Astrocyte of the cerebellum (primary cell): ENCODE measurements at regions of chr17 and their contacts with region 1.

Region 1: DNA sequence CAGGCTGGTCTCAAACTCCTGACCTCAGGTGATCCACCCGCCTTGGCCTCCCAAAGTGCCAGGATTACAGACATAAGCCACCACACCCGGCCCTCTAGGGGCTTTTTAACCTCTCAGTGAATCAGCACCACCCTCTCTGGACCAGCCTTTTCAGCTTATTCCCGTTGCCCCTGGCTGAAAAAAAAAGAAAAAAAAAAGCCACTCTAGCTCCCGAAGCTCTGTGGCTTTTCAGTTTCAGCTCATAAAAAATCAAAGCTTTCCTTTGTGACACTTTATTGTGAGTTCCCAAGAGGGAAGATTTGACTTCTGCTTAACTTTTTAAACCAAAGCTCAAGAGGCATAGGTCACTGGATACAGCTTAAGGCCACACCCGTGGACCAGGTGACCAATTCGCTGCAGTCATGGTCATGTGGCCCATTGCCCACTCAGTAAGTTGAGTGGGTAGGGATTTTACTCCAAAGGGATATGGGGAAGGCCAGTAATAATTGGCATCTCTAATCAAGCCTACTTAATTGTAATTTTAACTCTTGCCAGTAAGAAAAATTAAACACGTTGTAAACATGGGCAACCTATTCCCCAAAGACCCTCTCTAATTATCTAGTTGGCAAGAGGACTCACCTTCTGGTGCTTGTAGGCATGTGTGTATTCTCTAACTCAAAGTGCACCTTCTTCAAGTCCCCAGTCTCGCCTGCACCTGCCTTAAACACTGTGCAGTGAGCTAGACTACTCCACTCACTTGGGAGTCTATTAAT is 46.7 kb upstream of the MED13 start:
- DNase-seq: no peak
- H3K4me3 ChIP-seq: no peak overlapping the region
- CTCF ChIP-seq: no peak

Region 2: DNA sequence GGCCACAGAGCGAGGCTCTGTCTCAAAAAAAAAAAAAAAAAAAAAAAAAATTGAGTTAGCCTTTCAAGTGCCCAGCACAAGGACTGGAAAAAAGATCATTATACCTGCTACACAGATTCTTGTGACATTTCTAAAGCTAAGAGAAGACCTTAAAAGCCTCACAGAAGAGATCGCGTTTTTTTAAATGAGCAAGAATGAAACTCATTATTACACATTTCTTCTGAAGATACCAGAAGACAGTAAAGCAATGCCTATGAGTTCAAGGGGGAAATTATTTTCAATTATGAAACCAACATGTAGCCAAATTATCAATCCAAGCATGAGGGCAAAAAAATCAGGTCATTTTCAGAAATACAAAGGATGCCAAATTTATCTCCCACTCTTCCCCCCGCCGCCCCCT is 103.5 kb before region 1 on chr17:
- in situ Hi-C with region 1: no loop called
- DNase-seq: no peak
- H3K4me3 ChIP-seq: no peak overlapping the region
- CTCF ChIP-seq: no peak

Region 3: GRCh38 chr17:62145876-62146275 is 34.1 kb after region 1 on chr17:
- in situ Hi-C with region 1: loop called (anchors 5 kb)
- DNase-seq: no peak
- H3K4me3 ChIP-seq: no peak overlapping the region
- CTCF ChIP-seq: no peak

Region 4: DNA sequence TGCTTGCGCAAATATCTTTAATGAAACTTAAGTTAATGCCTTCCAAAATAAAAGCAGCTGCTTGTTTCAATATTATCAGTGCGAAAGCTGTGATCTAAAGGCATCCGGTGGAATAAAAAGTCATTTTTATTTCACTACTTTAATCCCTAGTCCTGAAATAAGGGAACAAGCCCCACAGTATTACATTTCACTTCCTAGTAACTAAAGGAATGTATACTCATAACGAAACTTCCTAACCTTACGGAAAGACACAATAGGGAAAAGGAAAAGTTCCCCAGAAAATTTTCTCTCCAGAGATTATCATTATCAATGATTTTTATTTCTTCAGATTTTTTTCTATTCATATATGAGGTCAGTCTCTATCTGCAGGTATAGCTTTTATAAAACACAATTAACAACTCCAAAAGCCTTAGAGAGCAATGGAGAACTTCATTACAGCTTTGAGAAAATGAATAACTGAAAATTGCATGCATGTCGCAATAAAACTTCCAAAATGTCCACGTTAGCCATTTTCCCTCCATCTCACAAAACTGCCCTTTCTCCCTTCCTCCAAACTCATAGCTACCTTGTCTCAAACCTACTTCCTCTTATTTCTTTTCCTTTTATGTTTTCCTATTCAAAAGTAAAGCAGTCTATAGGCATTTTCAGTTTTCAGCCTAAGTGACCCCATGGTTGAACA is 107.6 kb after region 1 on chr17:
- in situ Hi-C with region 1: no loop called
- DNase-seq: no peak
- H3K4me3 ChIP-seq: no peak overlapping the region
- CTCF ChIP-seq: no peak